Right lobe of liver (tissue), 6 donors: ENCODE measurements at regions of chr18 and their contacts with region 1.

Region 1: DNA sequence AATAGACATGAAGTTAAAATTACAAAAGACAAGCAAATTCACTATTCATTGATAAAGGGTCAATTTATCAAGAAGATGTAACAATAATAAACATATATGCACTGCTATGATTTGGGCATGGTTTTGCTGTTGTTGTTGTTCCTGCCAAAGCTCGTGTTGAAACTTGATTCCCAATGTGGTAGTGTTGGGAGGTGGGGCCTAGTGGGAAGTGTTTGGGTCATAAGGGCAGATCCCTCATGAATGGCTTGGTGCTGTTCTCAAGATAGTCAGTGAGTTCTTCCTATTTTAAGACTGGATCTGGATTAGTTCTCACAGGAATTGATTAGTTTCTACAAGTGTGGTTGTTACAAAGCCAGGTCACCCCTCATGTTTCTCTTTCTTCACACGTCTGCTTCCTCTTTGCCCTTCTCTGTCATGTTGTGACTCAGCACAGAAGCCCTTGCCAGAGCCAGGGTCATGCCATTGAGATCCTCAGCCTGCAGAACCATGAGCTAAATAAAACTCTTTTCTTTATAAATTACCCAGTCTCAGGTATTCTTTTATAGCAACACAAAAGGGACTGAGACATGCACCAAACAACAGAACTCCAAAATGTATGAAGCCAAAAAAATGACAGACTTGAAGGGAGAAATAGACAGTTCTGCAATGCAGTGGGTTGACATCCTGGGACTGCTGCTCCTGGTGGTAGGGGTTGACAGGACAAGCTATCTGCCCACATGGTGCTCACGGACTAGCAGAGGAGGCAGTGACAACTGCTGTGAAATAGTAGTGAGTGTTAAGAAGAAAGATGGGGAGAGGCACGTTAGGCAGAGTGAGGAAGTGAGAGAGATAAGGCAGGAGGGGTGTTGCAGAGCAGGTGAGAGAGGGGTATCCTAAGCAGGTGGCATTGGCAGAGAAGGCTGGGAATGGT is 18.6 kb upstream of the SKA1 start:
- DNase-seq: peak in 1 of 3 donors; percentile 38
- ATAC-seq: peak; percentile 34 to 83 (median 57)
- H3K4me3 ChIP-seq: no peak overlapping the region
- H3K27ac ChIP-seq: no peak overlapping the region
- H3K4me1 ChIP-seq: peaks cover 0 to 13% (median 3%) of the 10 kb centered on the region in 4 donors
- H3K27me3 ChIP-seq: no peaks in the 10 kb centered on the region
- CTCF ChIP-seq: no peak
- POLR2A ChIP-seq: no peak

Region 2: GRCh38 chr18:50218432-50219197 is 137.7 kb before region 1 on chr18:
- intact Hi-C with region 1: loop called (anchors 5 to 10 kb)
- DNase-seq: peak in 1 of 3 donors; percentile 53
- ATAC-seq: peak; percentile 88 to 93 (median 91)
- H3K4me3 ChIP-seq: no peak overlapping the region
- H3K27ac ChIP-seq: no peak overlapping the region
- H3K4me1 ChIP-seq: no peaks in the 10 kb centered on the region
- H3K27me3 ChIP-seq: no peaks in the 10 kb centered on the region
- CTCF ChIP-seq: peak; percentile 48 to 69 (median 59)
- POLR2A ChIP-seq: no peak

Region 3: DNA sequence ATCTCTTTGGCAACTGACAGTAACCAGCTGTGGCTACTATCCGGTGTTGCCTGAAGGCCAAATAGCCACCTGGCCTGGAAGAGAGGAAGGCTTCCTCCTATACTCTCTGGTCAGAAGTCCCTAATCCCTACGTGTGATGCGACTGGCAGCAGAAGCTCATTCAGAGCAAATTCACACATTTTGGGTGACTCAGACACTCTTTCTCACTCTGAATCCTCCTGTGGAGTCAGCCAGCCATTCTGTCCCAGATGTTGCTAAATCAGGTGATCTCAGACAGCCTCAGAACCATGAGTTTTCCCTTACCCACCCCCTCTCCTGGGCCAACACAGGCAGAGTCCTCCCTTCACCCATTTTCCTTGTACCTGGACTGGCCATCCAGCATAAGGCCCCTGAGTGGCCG is 124.7 kb before region 1 on chr18:
- intact Hi-C with region 1: no loop called
- DNase-seq: no peak
- ATAC-seq: no peak
- H3K4me3 ChIP-seq: no peak overlapping the region
- H3K27ac ChIP-seq: no peak overlapping the region
- H3K4me1 ChIP-seq: no peaks in the 10 kb centered on the region
- H3K27me3 ChIP-seq: no peaks in the 10 kb centered on the region
- CTCF ChIP-seq: no peak
- POLR2A ChIP-seq: no peak

Region 4: GRCh38 chr18:50287441-50288347 is 68.6 kb before region 1 on chr18 and contains the start of gene CXXC1:
- intact Hi-C with region 1: loop called in 1 of 2 experiments (anchors 10 kb)
- DNase-seq: peak; percentile 95 to 97 (median 96)
- ATAC-seq: peak; percentile 93 to 97 (median 95)
- H3K4me3 ChIP-seq: peak within 1 kb of the TSS; percentile 64 to 72 (median 66)
- H3K27ac ChIP-seq: peak within 1 kb of the TSS; percentile 63 to 85 (median 73)
- H3K4me1 ChIP-seq: peaks cover 0 to 4% (median 0%) of the 10 kb centered on the region in 4 donors
- H3K27me3 ChIP-seq: no peaks in the 10 kb centered on the region
- CTCF ChIP-seq: peak; percentile 41 to 72 (median 46)
- POLR2A ChIP-seq: peak; percentile 16
- total RNA-seq, gene CXXC1: 16.4 to 34.9 (median 26.1) TPM

Region 5: GRCh38 chr18:51092117-51092516 is 735.8 kb after region 1 on chr18:
- intact Hi-C with region 1: no loop called
- DNase-seq: no peak
- ATAC-seq: peak in 3 of 4 donors; percentile 24 to 43 (median 33)
- H3K4me3 ChIP-seq: no peak overlapping the region
- H3K27ac ChIP-seq: no peak overlapping the region
- H3K4me1 ChIP-seq: no peaks in the 10 kb centered on the region
- H3K27me3 ChIP-seq: no peaks in the 10 kb centered on the region
- CTCF ChIP-seq: no peak
- POLR2A ChIP-seq: no peak